ENCODE measurements at regions of chr14 and their contacts with region 1.

Region 1: DNA sequence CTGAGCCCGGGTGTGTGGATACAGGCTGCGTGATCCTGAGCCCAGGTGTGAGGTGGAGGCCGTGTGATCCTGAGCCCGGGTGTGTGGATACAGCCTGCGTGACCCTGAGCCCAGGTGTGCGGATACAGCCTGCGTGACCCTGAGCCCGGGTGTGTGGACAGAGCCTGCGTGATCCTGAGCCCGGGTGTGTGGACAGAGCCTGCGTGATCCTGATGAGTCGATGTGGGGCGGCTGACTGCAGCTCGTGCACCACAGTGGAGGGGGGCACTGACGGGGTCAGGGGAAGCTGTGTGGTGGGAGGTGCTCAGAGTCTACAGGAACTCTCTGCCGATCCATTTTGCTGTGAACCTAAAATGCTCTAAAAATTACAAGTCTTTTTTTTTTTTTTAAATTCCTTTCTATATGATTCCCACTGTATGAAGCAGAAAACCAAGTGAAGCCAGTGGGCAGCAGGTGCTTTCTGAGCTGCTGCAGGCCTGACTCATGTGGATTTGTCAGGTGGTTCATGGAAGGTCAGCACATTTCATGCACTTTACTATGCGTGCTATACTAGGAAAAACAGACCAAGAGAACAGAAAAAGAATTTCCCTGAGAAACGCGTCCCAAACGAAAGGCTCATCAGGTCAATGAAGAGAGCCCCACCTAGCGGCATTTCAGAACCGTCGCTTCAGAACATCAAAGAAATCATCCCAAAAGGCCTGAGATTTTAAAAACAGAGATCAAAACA is 19.3 kb downstream of the BRF1 start:
- DNase-seq: no peak
- H3K4me3 ChIP-seq: no peak overlapping the region
- H3K27ac ChIP-seq: no peak overlapping the region
- H3K4me1 ChIP-seq: peaks cover 0 to 5% (median 3%) of the 10 kb centered on the region in 4 experiments; a peak in 4 of 7 replicates
- H3K27me3 ChIP-seq: no peaks in the 10 kb centered on the region
- CTCF ChIP-seq: peak; percentile 31 to 75 (median 68)
- EP300 ChIP-seq: no peak
- POLR2A ChIP-seq: no peak
- RAD21 ChIP-seq: peak; percentile 74 to 80

Region 2: GRCh38 chr14:104611881-104612280 is 669.7 kb before region 1 on chr14:
- CTCF ChIA-PET with region 1: no interaction called
- POLR2A ChIA-PET with region 1: no interaction called
- DNase-seq: no peak
- H3K4me3 ChIP-seq: no peak overlapping the region
- H3K27ac ChIP-seq: no peak overlapping the region
- H3K4me1 ChIP-seq: no peaks in the 10 kb centered on the region
- H3K27me3 ChIP-seq: peaks cover 0 to 5% (median under 1%) of the 10 kb centered on the region in 4 experiments; a peak in 2 of 7 replicates
- CTCF ChIP-seq: no peak
- EP300 ChIP-seq: no peak
- POLR2A ChIP-seq: no peak
- RAD21 ChIP-seq: no peak

Region 3: GRCh38 chr14:105123981-105124765 is 157.4 kb before region 1 on chr14:
- CTCF ChIA-PET with region 1: no interaction called
- POLR2A ChIA-PET with region 1: no interaction called
- DNase-seq: no peak
- H3K4me3 ChIP-seq: no peak overlapping the region
- H3K27ac ChIP-seq: no peak overlapping the region
- H3K4me1 ChIP-seq: no peaks in the 10 kb centered on the region
- H3K27me3 ChIP-seq: peaks cover 0 to 2% (median 0%) of the 10 kb centered on the region in 4 experiments; a peak in 2 of 7 replicates
- CTCF ChIP-seq: no peak
- EP300 ChIP-seq: no peak
- POLR2A ChIP-seq: no peak
- RAD21 ChIP-seq: no peak

Region 4: GRCh38 chr14:105271224-105271890 is 10.2 kb before region 1 on chr14:
- CTCF ChIA-PET with region 1: interaction called, 14 read pairs
- POLR2A ChIA-PET with region 1: no interaction called
- DNase-seq: no peak
- H3K4me3 ChIP-seq: no peak overlapping the region
- H3K27ac ChIP-seq: no peak overlapping the region
- H3K4me1 ChIP-seq: no peaks in the 10 kb centered on the region
- H3K27me3 ChIP-seq: no peaks in the 10 kb centered on the region
- CTCF ChIP-seq: no peak
- EP300 ChIP-seq: no peak
- POLR2A ChIP-seq: no peak
- RAD21 ChIP-seq: no peak

Region 5: GRCh38 chr14:105292826-105293711 is 11.5 kb after region 1 on chr14:
- CTCF ChIA-PET with region 1: interaction called, 12 read pairs
- POLR2A ChIA-PET with region 1: no interaction called
- DNase-seq: no peak
- H3K4me3 ChIP-seq: no peak overlapping the region
- H3K27ac ChIP-seq: no peak overlapping the region
- H3K4me1 ChIP-seq: no peaks in the 10 kb centered on the region
- H3K27me3 ChIP-seq: no peaks in the 10 kb centered on the region
- CTCF ChIP-seq: no peak
- EP300 ChIP-seq: no peak
- POLR2A ChIP-seq: no peak
- RAD21 ChIP-seq: no peak

Measured in H1 (cell line).